ENCODE measurements at regions of chr9 and their contacts with region 1.

Region 1: GRCh38 chr9:96217754-96218693 is 84.0 kb downstream of the HSD17B3 start:
- DNase-seq: peak; percentile 76 to 92 (median 86)
- H3K4me3 ChIP-seq: peak overlapping the region; percentile 24
- H3K27ac ChIP-seq: peak overlapping the region; percentile 6 to 59
- H3K4me1 ChIP-seq: peaks cover 9% of the 10 kb centered on the region
- H3K27me3 ChIP-seq: no peaks in the 10 kb centered on the region
- CTCF ChIP-seq: peak; percentile 93 to 99 (median 95)
- EP300 ChIP-seq: no peak
- POLR2A ChIP-seq: peak; percentile 18

Region 2: GRCh38 chr9:95317119-95317892 is 900.7 kb before region 1 on chr9 and contains the start of gene FANCC:
- intact Hi-C with region 1: loop called in 1 of 4 experiments (anchors 5 kb)
- DNase-seq: peak; percentile 91 to 97 (median 94)
- H3K4me3 ChIP-seq: peak within 1 kb of the TSS; percentile 97
- H3K27ac ChIP-seq: peak within 1 kb of the TSS; percentile 67 to 77
- H3K4me1 ChIP-seq: no peaks in the 10 kb centered on the region
- H3K27me3 ChIP-seq: no peaks in the 10 kb centered on the region
- CTCF ChIP-seq: no peak
- EP300 ChIP-seq: no peak
- POLR2A ChIP-seq: no peak
- total RNA-seq, gene FANCC: 2.9 to 7.5 (median 4.9) TPM

Region 3: GRCh38 chr9:95508968-95509850 is 708.8 kb before region 1 on chr9:
- intact Hi-C with region 1: loop called in 1 of 4 experiments (anchors 10 kb)
- DNase-seq: peak; percentile 81 to 92 (median 85)
- H3K4me3 ChIP-seq: peak overlapping the region; percentile 72
- H3K27ac ChIP-seq: peak overlapping the region; percentile 82 to 86
- H3K4me1 ChIP-seq: peaks cover 4% of the 10 kb centered on the region
- H3K27me3 ChIP-seq: no peaks in the 10 kb centered on the region
- CTCF ChIP-seq: no peak
- EP300 ChIP-seq: no peak
- POLR2A ChIP-seq: no peak

Region 4: DNA sequence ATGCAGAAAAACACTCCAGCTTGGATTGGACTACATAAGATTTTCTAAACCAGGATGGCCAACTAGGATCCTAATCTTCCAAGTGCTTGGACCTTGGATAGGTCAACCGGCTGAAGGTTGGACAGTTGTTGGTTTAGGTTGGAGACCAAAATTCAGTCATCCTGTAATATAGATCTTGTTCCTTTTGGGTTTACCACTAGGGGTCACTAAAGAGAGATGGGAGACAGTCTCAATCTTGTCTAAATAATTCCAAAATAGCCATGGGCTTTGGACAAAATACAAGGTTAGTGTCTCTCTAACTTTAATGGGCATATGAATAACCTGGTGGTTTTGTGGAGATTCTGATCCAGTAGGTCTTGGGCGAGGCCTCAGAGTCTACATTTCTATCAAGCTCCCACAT is 491.3 kb before region 1 on chr9:
- intact Hi-C with region 1: loop called in 3 of 4 experiments (anchors 5 to 10 kb)
- DNase-seq: no peak
- H3K4me3 ChIP-seq: no peak overlapping the region
- H3K27ac ChIP-seq: no peak overlapping the region
- H3K4me1 ChIP-seq: peaks cover 3% of the 10 kb centered on the region
- H3K27me3 ChIP-seq: no peaks in the 10 kb centered on the region
- CTCF ChIP-seq: peak; percentile 52 to 62 (median 53)
- EP300 ChIP-seq: no peak
- POLR2A ChIP-seq: no peak

Region 5: GRCh38 chr9:96067004-96067999 is 150.7 kb before region 1 on chr9:
- intact Hi-C with region 1: loop called in 1 of 4 experiments (anchors 5 kb)
- DNase-seq: peak in 1 of 5 donors; percentile 70
- H3K4me3 ChIP-seq: no peak overlapping the region
- H3K27ac ChIP-seq: no peak overlapping the region
- H3K4me1 ChIP-seq: peaks cover 15% of the 10 kb centered on the region
- H3K27me3 ChIP-seq: no peaks in the 10 kb centered on the region
- CTCF ChIP-seq: no peak
- EP300 ChIP-seq: no peak
- POLR2A ChIP-seq: no peak

Region 6: DNA sequence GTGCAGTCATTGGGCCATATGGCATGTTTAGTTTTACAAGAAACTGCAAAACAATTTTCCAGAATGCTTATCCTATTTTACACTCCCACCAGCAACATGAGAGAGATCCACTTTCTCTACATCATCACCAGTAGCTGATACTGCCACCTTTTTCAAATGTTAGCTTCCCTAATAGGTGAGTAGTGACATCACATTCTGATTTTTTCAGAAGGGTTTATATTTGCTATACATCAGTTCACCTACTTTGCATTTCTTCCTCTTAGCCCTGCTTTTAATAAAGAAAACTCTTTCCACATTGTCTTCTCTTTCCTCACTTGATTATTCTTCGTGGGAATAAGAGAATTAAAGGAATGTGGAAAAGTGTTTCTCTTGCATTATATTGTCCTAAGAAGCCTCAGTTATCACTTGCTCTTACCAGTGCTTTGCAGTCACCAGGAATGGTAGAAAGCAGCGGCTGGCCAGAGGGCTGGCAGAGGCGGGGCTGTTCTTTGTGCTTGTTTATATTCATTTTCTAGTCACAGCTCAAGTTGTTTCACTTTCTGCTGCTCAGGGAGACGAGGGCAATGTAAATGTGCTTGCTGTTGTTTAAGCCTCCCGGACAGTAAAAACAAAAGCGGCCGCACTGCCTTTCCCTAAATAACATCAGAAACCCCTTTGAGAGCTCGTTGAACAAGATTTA is 80.9 kb before region 1 on chr9:
- intact Hi-C with region 1: no loop called
- DNase-seq: peak; percentile 27 to 67 (median 44)
- H3K4me3 ChIP-seq: no peak overlapping the region
- H3K27ac ChIP-seq: peak overlapping the region in 1 of 2 donors; percentile 50
- H3K4me1 ChIP-seq: peaks cover 18% of the 10 kb centered on the region
- H3K27me3 ChIP-seq: no peaks in the 10 kb centered on the region
- CTCF ChIP-seq: no peak
- EP300 ChIP-seq: no peak
- POLR2A ChIP-seq: no peak

Measured in ovary (tissue), 10 donors.